ENCODE measurements at regions of chr6 and their contacts with region 1.

Region 1: GRCh38 chr6:25942561-25943147 is 12.2 kb upstream of the SLC17A2 start:
- DNase-seq: peak; percentile 68
- ATAC-seq: peak; percentile 97
- H3K4me3 ChIP-seq: no peak overlapping the region
- H3K27ac ChIP-seq: no peak overlapping the region
- H3K4me1 ChIP-seq: no peaks in the 10 kb centered on the region
- H3K27me3 ChIP-seq: no peaks in the 10 kb centered on the region
- CTCF ChIP-seq: peak; percentile 87

Region 2: DNA sequence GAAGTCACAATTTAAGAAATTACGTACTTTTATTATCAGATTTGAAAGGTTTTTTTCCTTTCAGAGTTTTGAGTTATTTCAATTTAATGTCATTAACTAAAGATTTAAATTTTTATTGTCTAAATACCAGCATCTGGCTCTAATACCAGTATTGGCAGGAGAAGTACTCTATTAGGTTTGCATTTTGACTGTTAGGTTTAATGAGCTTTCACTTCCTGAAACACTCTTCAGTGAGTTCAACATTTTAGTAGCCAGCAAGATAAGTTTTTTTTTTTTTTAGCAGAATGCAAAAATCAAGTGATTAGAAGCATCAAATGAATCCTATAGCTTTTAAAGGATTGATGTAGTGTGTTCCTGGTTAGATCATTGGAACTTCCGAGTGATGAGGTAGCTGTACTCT is 324.7 kb before region 1 on chr6:
- CTCF ChIA-PET with region 1: no interaction called
- POLR2A ChIA-PET with region 1: no interaction called
- intact Hi-C with region 1: loop called (anchors 10 kb)
- DNase-seq: no peak
- ATAC-seq: no peak
- H3K4me3 ChIP-seq: no peak overlapping the region
- H3K27ac ChIP-seq: no peak overlapping the region
- H3K4me1 ChIP-seq: no peaks in the 10 kb centered on the region
- H3K27me3 ChIP-seq: no peaks in the 10 kb centered on the region
- CTCF ChIP-seq: no peak

Region 3: DNA sequence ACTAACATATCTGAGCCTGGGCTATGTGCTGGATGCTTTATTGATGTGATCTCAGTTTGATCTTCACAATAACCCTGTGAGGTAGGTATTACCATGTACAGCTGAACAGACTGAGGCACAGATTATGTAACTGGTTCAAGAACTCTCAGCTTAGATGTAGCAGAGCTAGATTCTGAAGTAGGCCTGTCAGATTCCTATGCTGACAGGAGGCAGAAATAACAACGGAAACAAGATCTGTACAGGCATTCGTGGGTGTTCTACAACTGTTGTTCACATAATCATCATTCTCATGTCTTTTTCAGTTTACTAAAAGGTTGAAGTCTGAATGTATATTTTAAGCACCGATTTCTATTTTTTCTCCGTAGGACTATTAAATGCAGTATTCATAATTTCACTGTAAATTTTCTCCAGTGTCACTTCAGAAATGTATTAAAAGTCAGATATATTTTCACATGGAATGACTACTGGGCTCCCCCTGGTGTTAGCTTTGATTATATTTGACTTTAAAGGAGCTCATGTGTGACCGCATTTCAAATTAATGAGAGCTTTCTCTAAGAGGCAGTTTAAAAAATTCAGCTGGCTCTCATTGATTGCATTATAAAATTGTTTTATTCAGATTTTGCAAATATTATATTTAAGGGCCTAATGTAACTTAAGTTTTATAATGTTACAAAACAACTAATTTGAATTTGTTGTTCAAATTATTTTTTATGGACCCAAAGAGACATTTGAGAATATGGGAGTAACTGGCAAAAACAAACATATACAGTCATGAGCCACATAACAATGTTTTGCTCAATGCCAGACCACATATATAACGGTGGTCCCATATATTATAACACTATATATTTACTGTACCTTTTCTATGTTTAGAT is 224.6 kb before region 1 on chr6:
- CTCF ChIA-PET with region 1: no interaction called
- POLR2A ChIA-PET with region 1: no interaction called
- intact Hi-C with region 1: loop called (anchors 1 kb)
- DNase-seq: peak; percentile 67
- ATAC-seq: no peak; the same call in 1 of the 2 replicates
- H3K4me3 ChIP-seq: no peak overlapping the region
- H3K27ac ChIP-seq: no peak overlapping the region
- H3K4me1 ChIP-seq: no peaks in the 10 kb centered on the region
- H3K27me3 ChIP-seq: peaks cover 40% of the 10 kb centered on the region
- CTCF ChIP-seq: peak; percentile 79

Region 4: DNA sequence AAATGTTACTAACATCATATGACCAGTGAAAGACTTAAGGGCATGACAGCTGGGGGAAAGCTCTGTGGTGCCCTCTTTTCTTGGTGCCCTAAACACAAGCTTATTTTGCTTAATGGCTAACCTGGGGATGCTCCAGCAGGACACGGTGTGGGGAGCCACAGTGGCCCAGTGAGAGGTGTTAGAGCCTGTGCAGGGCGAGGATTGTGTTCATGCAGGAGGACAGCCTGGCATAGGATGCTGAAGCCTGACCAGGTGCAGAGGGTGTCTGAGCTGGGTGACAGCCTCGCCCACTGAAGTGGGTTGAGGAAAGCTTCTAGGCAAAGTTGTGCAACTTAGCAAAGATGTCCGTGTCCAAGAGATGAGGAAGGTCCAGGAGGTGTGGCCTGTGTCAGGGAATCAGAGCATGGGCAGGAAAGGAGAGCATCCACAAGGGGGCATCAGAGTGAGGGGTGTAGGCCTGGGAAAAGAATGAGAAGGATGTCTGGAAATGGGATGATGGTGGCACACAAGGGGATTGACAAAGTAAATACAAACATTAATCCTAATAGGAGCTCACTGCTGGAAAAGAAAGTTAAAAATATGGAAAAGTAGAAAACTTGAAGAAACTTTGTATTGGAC is 154.2 kb before region 1 on chr6:
- CTCF ChIA-PET with region 1: no interaction called
- POLR2A ChIA-PET with region 1: no interaction called
- intact Hi-C with region 1: loop called (anchors 1 kb)
- DNase-seq: peak; percentile 77
- ATAC-seq: peak; percentile 83
- H3K4me3 ChIP-seq: no peak overlapping the region
- H3K27ac ChIP-seq: no peak overlapping the region
- H3K4me1 ChIP-seq: no peaks in the 10 kb centered on the region
- H3K27me3 ChIP-seq: peaks cover 13% of the 10 kb centered on the region; the same call in 1 of the 2 replicates
- CTCF ChIP-seq: peak; percentile 73

Region 5: GRCh38 chr6:25889877-25890853 is 52.5 kb before region 1 on chr6:
- CTCF ChIA-PET with region 1: no interaction called
- POLR2A ChIA-PET with region 1: no interaction called
- intact Hi-C with region 1: loop called (anchors 1 kb)
- DNase-seq: peak; percentile 75
- ATAC-seq: peak; percentile 87
- H3K4me3 ChIP-seq: no peak overlapping the region
- H3K27ac ChIP-seq: no peak overlapping the region
- H3K4me1 ChIP-seq: peaks cover 11% of the 10 kb centered on the region
- H3K27me3 ChIP-seq: peaks cover 27% of the 10 kb centered on the region; the same call in 1 of the 2 replicates
- CTCF ChIP-seq: peak; percentile 81

Region 6: DNA sequence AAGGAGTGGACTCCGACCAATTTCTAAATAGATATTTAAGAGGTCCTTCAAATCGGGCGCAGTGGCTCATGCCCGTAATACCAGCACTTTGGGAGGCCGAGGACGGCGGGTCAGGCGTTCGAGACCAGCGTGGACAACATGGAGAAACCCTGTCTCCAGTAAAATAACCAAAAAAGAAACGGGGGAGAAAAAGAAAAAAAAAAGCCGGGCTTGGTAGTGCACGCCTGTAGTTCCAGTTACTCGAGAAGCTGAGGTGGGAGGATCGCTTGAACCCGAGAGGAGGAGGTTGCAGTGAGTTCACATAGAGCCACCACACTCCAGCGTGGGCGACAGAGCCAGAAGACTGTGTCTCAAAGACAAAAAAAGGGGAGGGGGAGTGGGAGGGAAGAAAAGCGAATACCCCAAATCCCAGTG is 91.3 kb after region 1 on chr6:
- CTCF ChIA-PET with region 1: no interaction called
- POLR2A ChIA-PET with region 1: no interaction called
- intact Hi-C with region 1: no loop called
- DNase-seq: no peak
- ATAC-seq: no peak
- H3K4me3 ChIP-seq: peak overlapping the region; percentile 83
- H3K27ac ChIP-seq: peak overlapping the region; percentile 82
- H3K4me1 ChIP-seq: peaks cover 24% of the 10 kb centered on the region; the same call in 1 of the 2 replicates
- H3K27me3 ChIP-seq: no peaks in the 10 kb centered on the region
- CTCF ChIP-seq: no peak

Measured in PC-3 (cell line).